ENCODE measurements at regions of chr7 and their contacts with region 1.

Region 1: DNA sequence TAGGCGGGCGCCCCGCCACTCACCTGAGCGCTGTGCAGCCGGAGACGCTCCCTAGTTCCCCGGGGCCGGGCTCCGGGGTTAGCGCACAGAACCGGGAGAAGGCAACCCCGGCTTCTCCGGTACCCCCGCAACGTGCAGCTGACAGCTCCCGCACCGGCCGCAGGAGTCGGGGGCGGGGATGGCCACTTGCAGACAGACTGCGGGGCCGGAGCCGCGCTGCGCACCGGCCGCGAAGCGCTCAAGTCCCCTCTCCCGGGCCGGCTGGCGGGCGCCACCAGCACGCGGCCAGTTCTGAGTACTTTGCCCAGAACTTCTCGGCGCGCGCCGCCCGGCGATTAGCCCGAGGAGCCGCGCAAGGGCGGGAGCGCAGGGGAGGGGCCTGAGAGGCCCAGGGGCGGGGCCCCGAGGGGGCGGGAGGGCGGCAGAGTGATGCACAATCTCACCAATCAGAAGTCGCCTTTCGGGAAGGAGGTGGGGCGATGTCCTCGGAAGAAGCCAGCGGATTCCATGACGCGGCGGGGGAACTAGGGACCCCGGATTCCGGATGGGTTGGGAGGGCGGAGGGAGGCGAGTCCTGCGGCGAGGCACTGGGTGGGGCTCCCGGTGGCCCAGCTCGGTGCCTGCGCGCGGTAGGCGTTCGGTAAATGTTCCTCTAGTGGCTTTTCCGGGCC is at the start of gene OSBPL3:
- DNase-seq: peak; percentile 91
- H3K4me3 ChIP-seq: peak within 1 kb of the TSS; percentile 79
- H3K27ac ChIP-seq: peak within 1 kb of the TSS; percentile 91
- H3K27me3 ChIP-seq: no peaks in the 10 kb centered on the region
- CTCF ChIP-seq: no peak
- polyA plus RNA-seq, gene OSBPL3: 33.3 and 37.8 TPM in 2 replicates

Region 2: DNA sequence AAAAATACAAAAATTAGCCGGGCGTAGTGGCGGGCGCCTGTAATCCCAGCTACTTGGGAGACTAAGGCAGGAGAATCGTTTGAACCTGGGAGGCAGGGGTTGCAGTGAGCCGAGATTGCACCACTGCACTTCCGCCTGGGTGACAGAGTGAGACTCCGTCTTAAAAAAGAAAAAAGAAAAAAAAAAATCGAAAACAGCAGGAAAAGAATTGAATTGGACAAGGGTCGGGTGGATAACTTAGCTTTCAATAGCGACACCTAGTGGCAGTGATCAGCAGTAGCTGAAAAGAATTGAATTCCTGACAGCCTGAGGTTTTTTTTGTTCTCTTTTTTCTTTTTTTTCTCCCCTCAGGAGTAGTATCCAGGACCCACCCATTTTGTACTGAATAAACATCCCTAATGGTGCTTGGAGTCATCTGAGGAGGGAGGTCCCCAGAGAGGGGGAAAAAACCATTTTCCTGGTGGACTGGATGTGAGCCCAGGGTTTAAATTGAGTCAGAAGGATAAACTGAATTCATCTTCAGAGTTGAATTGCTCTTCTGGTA is 90.0 kb after region 1 on chr7:
- CTCF ChIA-PET with region 1: interaction called, 14 read pairs
- POLR2A ChIA-PET with region 1: interaction called, 4 read pairs
- DNase-seq: peak; percentile 56
- H3K4me3 ChIP-seq: no peak overlapping the region
- H3K27ac ChIP-seq: no peak overlapping the region
- H3K27me3 ChIP-seq: no peaks in the 10 kb centered on the region
- CTCF ChIP-seq: peak; percentile 87

Measured in AG04450 (cell line).